Naive thymus-derived CD4-positive, alpha-beta T cell (primary cell): ENCODE measurements at regions of chr17 and their contacts with region 1.

Region 1: DNA sequence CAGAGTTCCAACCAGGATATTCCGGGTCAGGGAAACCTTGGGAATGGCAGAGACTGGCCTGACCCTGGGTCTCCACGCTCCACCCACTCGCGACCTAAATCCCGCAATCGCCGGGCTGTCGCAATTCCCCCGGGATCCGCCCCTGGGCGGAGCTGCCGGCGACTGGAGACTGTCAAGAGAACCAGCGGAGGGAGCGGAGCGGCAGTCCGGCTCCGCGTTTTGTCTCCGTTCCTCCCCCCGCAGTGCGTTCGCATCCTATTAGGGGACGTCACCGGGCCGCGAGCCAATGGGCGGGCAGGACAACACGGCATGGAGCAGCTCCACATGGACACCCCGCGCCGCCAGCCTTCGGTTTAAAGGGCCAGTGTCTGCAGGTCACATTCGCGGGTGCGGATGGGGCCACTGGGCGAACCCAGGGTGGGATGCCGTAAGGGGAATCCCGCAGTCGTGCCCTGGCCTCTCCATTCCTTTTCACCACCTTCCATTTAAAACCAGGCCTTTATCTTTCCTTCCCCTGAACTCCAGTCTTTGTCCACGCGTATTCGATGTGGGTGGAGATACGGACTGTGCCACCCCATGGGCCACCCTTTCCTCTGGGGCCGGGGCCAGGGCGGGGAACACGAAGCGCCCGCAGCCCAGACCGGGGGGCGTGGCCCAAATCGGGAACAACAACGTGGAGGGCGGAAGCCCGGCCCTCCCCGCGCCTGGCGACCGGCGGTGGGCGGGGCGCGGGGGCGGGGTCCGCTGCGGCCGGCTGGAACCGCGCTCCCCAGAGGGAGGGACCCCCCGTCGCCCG is 764 bp upstream of the MNT start:
- DNase-seq: peak; percentile 94 to 100 (median 99)
- ATAC-seq: peak; percentile 73
- H3K4me3 ChIP-seq: peak overlapping the region; percentile 94
- H3K4me3 Mint-ChIP-seq: peak overlapping the region; percentile 94 to 100 (median 98)
- H3K27ac ChIP-seq: peak overlapping the region; percentile 97
- H3K27ac Mint-ChIP-seq: peak overlapping the region; percentile 97 to 100 (median 99)
- H3K4me1 ChIP-seq: peaks cover 6 to 30% of the 10 kb centered on the region in 2 donors
- H3K4me1 Mint-ChIP-seq: peaks cover 27 to 62% (median 35%) of the 10 kb centered on the region in 7 donors
- H3K27me3 ChIP-seq: no peaks in the 10 kb centered on the region
- H3K27me3 Mint-ChIP-seq: no peaks in the 10 kb centered on the region

Region 2: GRCh38 chr17:1829592-1830257 is 571.9 kb before region 1 on chr17 and contains the starts of genes RPA1 and SMYD4:
- CTCF ChIA-PET with region 1: no interaction called
- POLR2A ChIA-PET with region 1: interaction called, 3 read pairs
- intact Hi-C with region 1: loop called in 1 of 2 experiments (anchors 2 kb)
- DNase-seq: peak; percentile 84 to 94 (median 89)
- ATAC-seq: peak; percentile 100
- H3K4me3 ChIP-seq: peak within 1 kb of the TSS; percentile 82
- H3K4me3 Mint-ChIP-seq: peak within 1 kb of the TSS; percentile 89 to 100 (median 98)
- H3K27ac ChIP-seq: peak within 1 kb of the TSS; percentile 86
- H3K27ac Mint-ChIP-seq: peak within 1 kb of the TSS; percentile 89 to 99 (median 95)
- H3K4me1 ChIP-seq: peaks cover 17 to 26% of the 10 kb centered on the region in 2 donors
- H3K4me1 Mint-ChIP-seq: peaks cover 39 to 80% (median 67%) of the 10 kb centered on the region in 7 donors
- H3K27me3 ChIP-seq: no peaks in the 10 kb centered on the region
- H3K27me3 Mint-ChIP-seq: no peaks in the 10 kb centered on the region
- total RNA-seq, gene RPA1: 57.8 to 264 (median 110) TPM
- total RNA-seq, gene SMYD4: 19.8 to 38.4 (median 32.5) TPM

Region 3: GRCh38 chr17:2266045-2266864 is 135.4 kb before region 1 on chr17:
- CTCF ChIA-PET with region 1: no interaction called
- POLR2A ChIA-PET with region 1: interaction called, 3 read pairs
- intact Hi-C with region 1: loop called in 1 of 2 experiments (anchors 1 kb)
- DNase-seq: peak; percentile 20 to 96 (median 91)
- ATAC-seq: peak; percentile 92
- H3K4me3 ChIP-seq: peak overlapping the region; percentile 38
- H3K4me3 Mint-ChIP-seq: peak overlapping the region; percentile 69 to 94 (median 82)
- H3K27ac ChIP-seq: peak overlapping the region; percentile 80
- H3K27ac Mint-ChIP-seq: peak overlapping the region; percentile 96 to 100 (median 99)
- H3K4me1 ChIP-seq: peaks cover 65 to 90% of the 10 kb centered on the region in 2 donors
- H3K4me1 Mint-ChIP-seq: peaks cover 38 to 89% (median 83%) of the 10 kb centered on the region in 7 donors
- H3K27me3 ChIP-seq: no peaks in the 10 kb centered on the region
- H3K27me3 Mint-ChIP-seq: no peaks in the 10 kb centered on the region

Region 4: DNA sequence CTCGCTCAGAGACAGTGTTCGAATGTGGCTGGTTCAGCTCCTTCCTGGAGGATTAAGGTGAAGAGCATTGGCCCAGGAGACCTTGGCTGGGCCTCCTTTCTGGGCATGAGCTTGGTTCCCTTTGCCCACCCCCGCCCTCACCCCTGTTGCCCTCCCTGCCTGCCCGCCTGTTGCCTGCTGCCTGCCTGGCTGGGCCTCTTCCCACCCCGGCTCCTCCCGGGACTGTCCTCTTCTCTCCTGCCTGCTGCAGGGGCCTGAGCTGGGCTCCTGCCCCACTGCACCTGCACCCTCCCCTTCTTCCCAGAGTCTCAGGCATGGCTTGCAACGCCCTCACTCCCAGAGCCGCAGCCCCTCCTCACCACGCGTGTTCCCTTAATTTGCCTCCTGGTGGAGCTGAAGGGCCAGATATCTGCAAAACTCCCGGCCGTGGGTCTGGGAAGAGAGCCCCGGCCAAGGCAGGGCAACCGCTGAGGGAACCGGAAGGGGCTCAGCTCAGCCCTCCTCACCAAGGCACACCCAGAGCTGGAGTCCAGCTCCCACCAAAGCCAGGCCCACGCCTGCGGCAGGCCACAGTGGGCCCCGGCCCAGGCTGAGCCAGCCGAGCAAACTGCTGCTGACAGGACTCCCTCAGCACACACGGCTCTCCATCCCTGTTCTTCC is 31.9 kb before region 1 on chr17:
- CTCF ChIA-PET with region 1: no interaction called
- POLR2A ChIA-PET with region 1: no interaction called
- intact Hi-C with region 1: no loop called
- DNase-seq: peak in 1 of 9 donors; percentile 7
- ATAC-seq: no peak
- H3K4me3 ChIP-seq: no peak overlapping the region
- H3K4me3 Mint-ChIP-seq: no peak overlapping the region
- H3K27ac ChIP-seq: no peak overlapping the region
- H3K27ac Mint-ChIP-seq: no peak overlapping the region
- H3K4me1 ChIP-seq: no peaks in the 10 kb centered on the region
- H3K4me1 Mint-ChIP-seq: no peaks in the 10 kb centered on the region
- H3K27me3 ChIP-seq: no peaks in the 10 kb centered on the region
- H3K27me3 Mint-ChIP-seq: no peaks in the 10 kb centered on the region

Region 5: GRCh38 chr17:2386400-2387085 is 15.1 kb before region 1 on chr17:
- CTCF ChIA-PET with region 1: interaction called, 23 read pairs
- POLR2A ChIA-PET with region 1: interaction called, 82 read pairs
- intact Hi-C with region 1: loop called (anchors 1 kb)
- DNase-seq: peak in 1 of 9 donors; percentile 8
- ATAC-seq: no peak
- H3K4me3 ChIP-seq: no peak overlapping the region
- H3K4me3 Mint-ChIP-seq: no peak overlapping the region
- H3K27ac ChIP-seq: no peak overlapping the region
- H3K27ac Mint-ChIP-seq: peak overlapping the region in 1 of 9 donors; percentile 65
- H3K4me1 ChIP-seq: peaks cover 3 to 19% of the 10 kb centered on the region in 2 donors
- H3K4me1 Mint-ChIP-seq: peaks cover 13 to 35% (median 27%) of the 10 kb centered on the region in 7 donors
- H3K27me3 ChIP-seq: no peaks in the 10 kb centered on the region
- H3K27me3 Mint-ChIP-seq: no peaks in the 10 kb centered on the region

Region 6: DNA sequence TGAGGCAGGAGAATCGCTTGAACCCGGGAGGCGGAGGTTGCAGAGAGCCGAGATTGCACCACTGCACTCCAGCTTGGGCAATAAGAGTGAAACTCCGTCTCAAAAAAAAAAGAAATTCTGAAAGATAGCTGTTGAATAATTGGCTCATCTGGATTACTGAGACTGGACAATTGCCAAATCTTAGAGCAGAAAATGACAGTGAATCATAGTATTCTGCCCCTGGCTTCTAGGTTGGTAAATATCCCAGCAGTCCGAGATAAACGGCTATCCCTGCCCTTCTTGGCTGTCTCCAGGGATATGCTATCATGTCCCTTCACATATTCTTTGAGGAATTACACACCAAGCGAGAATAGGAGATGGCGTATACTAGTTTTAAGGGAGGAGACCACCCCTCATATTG is 145.6 kb after region 1 on chr17:
- CTCF ChIA-PET with region 1: no interaction called
- POLR2A ChIA-PET with region 1: no interaction called
- intact Hi-C with region 1: no loop called
- DNase-seq: no peak
- ATAC-seq: no peak
- H3K4me3 ChIP-seq: no peak overlapping the region
- H3K4me3 Mint-ChIP-seq: no peak overlapping the region
- H3K27ac ChIP-seq: no peak overlapping the region
- H3K27ac Mint-ChIP-seq: no peak overlapping the region
- H3K4me1 ChIP-seq: no peaks in the 10 kb centered on the region
- H3K4me1 Mint-ChIP-seq: peaks cover 0 to 6% (median 0%) of the 10 kb centered on the region in 7 donors
- H3K27me3 ChIP-seq: no peaks in the 10 kb centered on the region
- H3K27me3 Mint-ChIP-seq: peaks cover 0 to 5% (median 5%) of the 10 kb centered on the region in 5 donors

Region 7: GRCh38 chr17:2571523-2572303 is 170.1 kb after region 1 on chr17:
- CTCF ChIA-PET with region 1: no interaction called
- POLR2A ChIA-PET with region 1: no interaction called
- intact Hi-C with region 1: no loop called
- DNase-seq: no peak
- ATAC-seq: no peak
- H3K4me3 ChIP-seq: no peak overlapping the region
- H3K4me3 Mint-ChIP-seq: no peak overlapping the region
- H3K27ac ChIP-seq: no peak overlapping the region
- H3K27ac Mint-ChIP-seq: peak overlapping the region in 3 of 9 donors; percentile 37 to 67 (median 48)
- H3K4me1 ChIP-seq: no peaks in the 10 kb centered on the region
- H3K4me1 Mint-ChIP-seq: peaks cover 0 to 5% (median 0%) of the 10 kb centered on the region in 7 donors
- H3K27me3 ChIP-seq: no peaks in the 10 kb centered on the region
- H3K27me3 Mint-ChIP-seq: no peaks in the 10 kb centered on the region

Region 8: GRCh38 chr17:2592971-2593820 is 191.6 kb after region 1 on chr17 and contains the start of gene PAFAH1B1:
- CTCF ChIA-PET with region 1: no interaction called
- POLR2A ChIA-PET with region 1: no interaction called
- intact Hi-C with region 1: loop called in 1 of 2 experiments (anchors 2 kb)
- DNase-seq: peak; percentile 94 to 99 (median 97)
- ATAC-seq: peak; percentile 90
- H3K4me3 ChIP-seq: peak within 1 kb of the TSS; percentile 69
- H3K4me3 Mint-ChIP-seq: peak within 1 kb of the TSS; percentile 87 to 97 (median 92)
- H3K27ac ChIP-seq: peak within 1 kb of the TSS; percentile 90
- H3K27ac Mint-ChIP-seq: peak within 1 kb of the TSS; percentile 85 to 96 (median 92)
- H3K4me1 ChIP-seq: peaks cover 23 to 31% of the 10 kb centered on the region in 2 donors
- H3K4me1 Mint-ChIP-seq: peaks cover 20 to 38% (median 28%) of the 10 kb centered on the region in 7 donors
- H3K27me3 ChIP-seq: no peaks in the 10 kb centered on the region
- H3K27me3 Mint-ChIP-seq: peaks cover 0 to 6% (median 0%) of the 10 kb centered on the region in 5 donors
- total RNA-seq, gene PAFAH1B1: 112 to 156 (median 140) TPM